ENCODE measurements at regions of chr1 and their contacts with region 1.

Region 1: GRCh38 chr1:27234049-27234882 is at the start of gene WDTC1:
- DNase-seq: peak; percentile 97 to 99 (median 98)
- H3K4me3 ChIP-seq: peak within 1 kb of the TSS; percentile 63 to 73
- H3K4me3 Mint-ChIP-seq: peak within 1 kb of the TSS; percentile 95 to 99 (median 98)
- H3K27ac ChIP-seq: peak within 1 kb of the TSS; percentile 69
- H3K27ac Mint-ChIP-seq: peak within 1 kb of the TSS; percentile 91 to 98 (median 96)
- H3K4me1 ChIP-seq: peaks cover 26% of the 10 kb centered on the region
- H3K4me1 Mint-ChIP-seq: peaks cover 27 to 41% (median 33%) of the 10 kb centered on the region in 4 donors
- H3K27me3 ChIP-seq: no peaks in the 10 kb centered on the region
- H3K27me3 Mint-ChIP-seq: peaks cover 0 to 3% of the 10 kb centered on the region in 2 donors
- total RNA-seq, gene WDTC1: 53.3 to 54.5 TPM

Region 2: DNA sequence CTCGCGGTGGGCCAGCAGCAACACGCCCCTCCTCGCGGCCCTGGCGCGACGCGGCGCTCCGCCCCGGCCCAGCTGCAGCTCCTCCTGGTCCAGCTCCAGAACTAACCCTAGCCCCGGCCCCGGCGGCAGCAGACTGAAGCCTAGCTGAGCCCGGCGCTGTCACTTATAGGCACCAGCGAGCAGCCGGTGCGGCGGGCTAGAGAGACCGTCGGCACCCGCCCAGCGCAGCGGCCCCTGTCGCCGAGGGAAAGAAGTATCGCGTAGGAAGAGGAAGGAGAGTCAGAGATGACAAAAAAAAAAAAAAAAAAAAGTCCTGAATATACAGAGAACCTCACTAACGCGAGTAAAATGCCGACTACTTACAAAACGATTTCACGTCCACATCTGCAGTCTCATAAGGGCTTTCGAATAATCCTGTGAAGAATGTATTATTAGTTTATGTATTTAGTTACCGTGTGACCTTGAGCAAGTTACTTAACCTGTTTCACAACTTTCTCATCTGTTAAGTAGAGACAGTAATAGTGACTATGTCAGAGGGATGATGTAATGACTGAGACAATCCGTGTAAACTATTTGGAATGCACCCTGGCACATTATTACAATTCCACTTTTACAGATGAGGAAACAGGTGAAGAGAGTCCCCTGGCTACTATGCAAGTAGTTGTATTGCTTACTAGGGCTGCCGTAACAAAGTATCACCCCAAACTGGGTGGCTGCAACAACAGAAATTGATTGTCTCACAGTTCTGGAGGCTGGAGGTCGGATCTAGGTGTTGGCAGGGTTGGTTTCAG is 79.1 kb before region 1 on chr1 and contains the start of gene SLC9A1:
- CTCF ChIA-PET with region 1: interaction called, 3 read pairs
- POLR2A ChIA-PET with region 1: interaction called, 6 read pairs
- intact Hi-C with region 1: loop called (anchors 1 kb)
- DNase-seq: peak; percentile 93 to 95 (median 93)
- H3K4me3 ChIP-seq: peak within 1 kb of the TSS; percentile 38 to 42
- H3K4me3 Mint-ChIP-seq: peak within 1 kb of the TSS; percentile 82 to 95 (median 92)
- H3K27ac ChIP-seq: peak within 1 kb of the TSS; percentile 90
- H3K27ac Mint-ChIP-seq: peak within 1 kb of the TSS; percentile 97 to 100 (median 99)
- H3K4me1 ChIP-seq: peaks cover 46% of the 10 kb centered on the region
- H3K4me1 Mint-ChIP-seq: peaks cover 36 to 49% (median 43%) of the 10 kb centered on the region in 4 donors
- H3K27me3 ChIP-seq: no peaks in the 10 kb centered on the region
- H3K27me3 Mint-ChIP-seq: no peaks in the 10 kb centered on the region
- total RNA-seq, gene SLC9A1: 11.4 to 13.2 TPM

Region 3: GRCh38 chr1:27201295-27201694 is 33.0 kb before region 1 on chr1:
- CTCF ChIA-PET with region 1: no interaction called
- POLR2A ChIA-PET with region 1: no interaction called
- intact Hi-C with region 1: loop called (anchors 1 kb)
- DNase-seq: no peak
- H3K4me3 ChIP-seq: no peak overlapping the region
- H3K4me3 Mint-ChIP-seq: no peak overlapping the region
- H3K27ac ChIP-seq: no peak overlapping the region
- H3K27ac Mint-ChIP-seq: no peak overlapping the region
- H3K4me1 ChIP-seq: peaks cover 6% of the 10 kb centered on the region
- H3K4me1 Mint-ChIP-seq: peaks cover 4 to 6% (median 5%) of the 10 kb centered on the region in 4 donors
- H3K27me3 ChIP-seq: no peaks in the 10 kb centered on the region
- H3K27me3 Mint-ChIP-seq: peaks cover 1 to 5% of the 10 kb centered on the region in 2 donors

Region 4: GRCh38 chr1:27884006-27884954 is 650.0 kb after region 1 on chr1:
- CTCF ChIA-PET with region 1: no interaction called
- POLR2A ChIA-PET with region 1: no interaction called
- intact Hi-C with region 1: no loop called
- DNase-seq: no peak
- H3K4me3 ChIP-seq: no peak overlapping the region
- H3K4me3 Mint-ChIP-seq: peak overlapping the region in 2 of 8 donors; percentile 10 to 54
- H3K27ac ChIP-seq: no peak overlapping the region
- H3K27ac Mint-ChIP-seq: peak overlapping the region; percentile 27 to 92 (median 72)
- H3K4me1 ChIP-seq: peaks cover 45% of the 10 kb centered on the region
- H3K4me1 Mint-ChIP-seq: peaks cover 26 to 73% (median 53%) of the 10 kb centered on the region in 4 donors
- H3K27me3 ChIP-seq: no peaks in the 10 kb centered on the region
- H3K27me3 Mint-ChIP-seq: no peaks in the 10 kb centered on the region

Measured in CD4-positive, alpha-beta memory T cell (primary cell).